ENCODE measurements at regions of chr1 and their contacts with region 1.

Region 1: DNA sequence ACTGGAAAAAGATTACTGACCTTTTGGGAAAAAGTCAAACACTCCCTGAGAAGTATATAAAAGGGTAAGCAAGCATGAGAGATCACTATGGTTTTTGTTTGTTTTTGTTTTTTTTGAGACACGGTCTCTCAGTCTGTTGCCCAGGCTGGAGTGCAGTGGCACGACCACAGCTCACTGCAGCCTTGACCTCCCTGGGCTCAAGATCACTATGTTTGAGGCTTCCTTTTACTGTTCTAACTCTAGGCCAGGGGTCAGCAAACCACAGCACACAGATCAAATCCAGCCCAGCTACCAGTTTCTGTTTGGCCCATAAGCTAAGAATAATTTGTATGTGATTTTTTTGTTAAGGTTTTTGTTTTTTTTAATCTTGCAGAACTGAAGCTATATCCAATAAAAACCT is 25.7 kb downstream of the PSMB4 start:
- DNase-seq: no peak
- ATAC-seq: no peak
- H3K4me3 Mint-ChIP-seq: no peak overlapping the region
- H3K27ac Mint-ChIP-seq: no peak overlapping the region
- H3K4me1 Mint-ChIP-seq: no peaks in the 10 kb centered on the region
- H3K27me3 Mint-ChIP-seq: no peaks in the 10 kb centered on the region
- CTCF ChIP-seq: no peak

Region 2: DNA sequence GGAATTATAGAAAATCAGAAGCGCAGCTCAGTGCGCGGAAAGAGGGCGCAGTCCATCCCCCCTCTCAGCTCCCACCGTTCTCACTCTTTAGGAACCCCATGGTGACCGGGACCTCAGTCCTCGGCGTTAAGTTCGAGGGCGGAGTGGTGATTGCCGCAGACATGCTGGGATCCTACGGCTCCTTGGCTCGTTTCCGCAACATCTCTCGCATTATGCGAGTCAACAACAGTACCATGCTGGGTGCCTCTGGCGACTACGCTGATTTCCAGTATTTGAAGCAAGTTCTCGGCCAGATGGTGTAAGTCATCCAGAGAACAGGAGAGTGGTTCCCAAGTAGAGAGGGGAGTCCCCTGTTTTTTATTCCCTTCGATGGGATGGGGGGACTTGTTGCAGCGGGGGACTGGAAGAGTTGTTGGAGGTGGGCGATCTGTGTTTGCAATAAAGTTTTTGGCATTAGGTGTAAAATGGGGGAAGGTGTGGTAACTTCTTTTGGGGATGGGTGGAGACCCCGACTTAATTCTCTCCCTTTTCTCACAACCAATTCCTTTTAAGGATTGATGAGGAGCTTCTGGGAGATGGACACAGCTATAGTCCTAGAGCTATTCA is 25.1 kb before region 1 on chr1:
- CTCF ChIA-PET with region 1: no interaction called
- POLR2A ChIA-PET with region 1: no interaction called
- DNase-seq: peak; percentile 24
- ATAC-seq: peak; percentile 38
- H3K4me3 Mint-ChIP-seq: peak overlapping the region; percentile 97
- H3K27ac Mint-ChIP-seq: peak overlapping the region; percentile 100
- H3K4me1 Mint-ChIP-seq: peaks cover 11% of the 10 kb centered on the region
- H3K27me3 Mint-ChIP-seq: no peaks in the 10 kb centered on the region
- CTCF ChIP-seq: no peak

Region 3: GRCh38 chr1:151435160-151435559 is 10.1 kb after region 1 on chr1:
- CTCF ChIA-PET with region 1: no interaction called
- POLR2A ChIA-PET with region 1: interaction called, 10 read pairs
- DNase-seq: no peak
- ATAC-seq: no peak
- H3K4me3 Mint-ChIP-seq: no peak overlapping the region
- H3K27ac Mint-ChIP-seq: no peak overlapping the region
- H3K4me1 Mint-ChIP-seq: no peaks in the 10 kb centered on the region
- H3K27me3 Mint-ChIP-seq: no peaks in the 10 kb centered on the region
- CTCF ChIP-seq: no peak

Region 4: DNA sequence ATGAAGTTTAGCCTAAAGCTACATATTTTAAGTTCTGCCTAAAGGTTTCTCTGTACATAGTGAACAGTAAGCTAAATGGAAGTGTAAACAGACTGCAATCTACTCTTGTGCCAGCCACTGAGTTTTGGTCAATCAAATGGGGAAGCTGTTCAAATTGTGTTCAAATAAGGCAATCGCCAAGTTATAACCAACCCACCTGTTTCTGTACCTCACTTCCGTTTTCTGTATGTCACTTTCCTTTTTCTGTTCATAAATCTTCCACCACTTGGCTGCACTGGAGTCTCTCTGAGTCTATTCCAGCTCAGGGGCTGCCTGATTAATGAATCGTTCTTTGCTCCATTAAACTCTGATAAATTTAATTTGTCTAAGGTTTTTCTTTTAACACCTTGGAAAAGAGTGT is 495.0 kb after region 1 on chr1:
- CTCF ChIA-PET with region 1: no interaction called
- POLR2A ChIA-PET with region 1: no interaction called
- DNase-seq: no peak
- ATAC-seq: no peak
- H3K4me3 Mint-ChIP-seq: no peak overlapping the region
- H3K27ac Mint-ChIP-seq: no peak overlapping the region
- H3K4me1 Mint-ChIP-seq: peaks cover 20% of the 10 kb centered on the region
- H3K27me3 Mint-ChIP-seq: no peaks in the 10 kb centered on the region
- CTCF ChIP-seq: no peak